ENCODE measurements at regions of chr1 and their contacts with region 1.

Region 1: GRCh38 chr1:5329068-5329739 is 663.0 kb downstream of the NPHP4 start:
- DNase-seq: no peak
- ATAC-seq: peak in 1 of 2 donors; percentile 83
- H3K4me3 ChIP-seq: no peak overlapping the region
- H3K27ac ChIP-seq: no peak overlapping the region
- H3K4me1 ChIP-seq: no peaks in the 10 kb centered on the region
- H3K27me3 ChIP-seq: no peaks in the 10 kb centered on the region

Region 2: GRCh38 chr1:5151511-5151910 is 177.7 kb before region 1 on chr1:
- intact Hi-C with region 1: no loop called
- DNase-seq: no peak
- ATAC-seq: no peak
- H3K4me3 ChIP-seq: no peak overlapping the region
- H3K27ac ChIP-seq: no peak overlapping the region
- H3K4me1 ChIP-seq: no peaks in the 10 kb centered on the region
- H3K27me3 ChIP-seq: peaks cover 2% of the 10 kb centered on the region

Region 3: DNA sequence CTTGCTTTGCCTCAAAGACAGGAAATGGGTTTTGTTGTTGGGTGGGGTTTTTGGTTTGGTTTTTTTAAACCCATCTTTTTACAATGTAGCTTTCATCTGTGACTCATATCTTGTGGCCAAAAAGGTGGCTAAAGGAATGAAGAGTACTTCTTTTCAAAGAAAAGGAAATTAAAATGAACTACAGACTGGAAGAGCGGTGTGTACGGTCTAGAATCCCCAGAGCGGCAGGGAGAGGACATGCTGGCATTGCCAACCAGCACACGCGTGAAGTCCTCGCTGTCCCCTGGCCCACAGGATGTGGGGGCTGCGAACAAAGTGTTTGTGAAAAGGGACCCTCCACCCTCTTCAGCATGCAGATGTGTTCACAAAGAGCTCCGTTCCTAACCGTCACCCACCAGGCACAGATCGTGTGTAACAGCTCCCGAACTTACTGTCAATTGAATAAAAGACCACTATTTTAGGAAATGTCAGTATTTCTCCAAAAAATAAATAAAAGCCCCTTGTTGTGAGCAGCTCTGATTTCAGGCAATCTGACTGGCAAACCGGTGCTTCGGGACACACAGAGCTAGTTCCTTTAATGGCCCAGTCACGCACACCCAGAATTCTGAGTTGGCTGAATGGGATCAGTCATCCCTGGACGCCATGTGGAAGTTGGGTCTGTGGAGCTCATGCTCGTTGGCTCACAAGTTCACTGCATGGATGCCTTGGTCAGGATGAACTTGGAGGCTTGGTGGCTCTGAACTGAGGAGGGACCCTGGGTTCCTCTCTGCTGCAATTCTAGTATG is 60.1 kb after region 1 on chr1:
- intact Hi-C with region 1: loop called in 1 of 4 experiments (anchors 10 kb)
- DNase-seq: no peak
- ATAC-seq: no peak
- H3K4me3 ChIP-seq: no peak overlapping the region
- H3K27ac ChIP-seq: no peak overlapping the region
- H3K4me1 ChIP-seq: no peaks in the 10 kb centered on the region
- H3K27me3 ChIP-seq: no peaks in the 10 kb centered on the region